ENCODE measurements at regions of chr14 and their contacts with region 1.

Region 1: GRCh38 chr14:70600382-70601157 is at the start of gene MED6:
- DNase-seq: peak; percentile 83 to 96 (median 94)
- ATAC-seq: peak; percentile 100
- H3K4me3 ChIP-seq: peak within 1 kb of the TSS; percentile 90 to 99
- H3K4me3 Mint-ChIP-seq: peak within 1 kb of the TSS; percentile 99
- H3K27ac ChIP-seq: peak within 1 kb of the TSS; percentile 92 to 96
- H3K27ac Mint-ChIP-seq: peak within 1 kb of the TSS; percentile 99
- H3K4me1 ChIP-seq: peaks cover 20% of the 10 kb centered on the region
- H3K4me1 Mint-ChIP-seq: peaks cover 30% of the 10 kb centered on the region
- H3K27me3 ChIP-seq: no peaks in the 10 kb centered on the region
- H3K27me3 Mint-ChIP-seq: no peaks in the 10 kb centered on the region
- CTCF ChIP-seq: no peak
- total RNA-seq, gene MED6: 116 to 119 TPM

Region 2: DNA sequence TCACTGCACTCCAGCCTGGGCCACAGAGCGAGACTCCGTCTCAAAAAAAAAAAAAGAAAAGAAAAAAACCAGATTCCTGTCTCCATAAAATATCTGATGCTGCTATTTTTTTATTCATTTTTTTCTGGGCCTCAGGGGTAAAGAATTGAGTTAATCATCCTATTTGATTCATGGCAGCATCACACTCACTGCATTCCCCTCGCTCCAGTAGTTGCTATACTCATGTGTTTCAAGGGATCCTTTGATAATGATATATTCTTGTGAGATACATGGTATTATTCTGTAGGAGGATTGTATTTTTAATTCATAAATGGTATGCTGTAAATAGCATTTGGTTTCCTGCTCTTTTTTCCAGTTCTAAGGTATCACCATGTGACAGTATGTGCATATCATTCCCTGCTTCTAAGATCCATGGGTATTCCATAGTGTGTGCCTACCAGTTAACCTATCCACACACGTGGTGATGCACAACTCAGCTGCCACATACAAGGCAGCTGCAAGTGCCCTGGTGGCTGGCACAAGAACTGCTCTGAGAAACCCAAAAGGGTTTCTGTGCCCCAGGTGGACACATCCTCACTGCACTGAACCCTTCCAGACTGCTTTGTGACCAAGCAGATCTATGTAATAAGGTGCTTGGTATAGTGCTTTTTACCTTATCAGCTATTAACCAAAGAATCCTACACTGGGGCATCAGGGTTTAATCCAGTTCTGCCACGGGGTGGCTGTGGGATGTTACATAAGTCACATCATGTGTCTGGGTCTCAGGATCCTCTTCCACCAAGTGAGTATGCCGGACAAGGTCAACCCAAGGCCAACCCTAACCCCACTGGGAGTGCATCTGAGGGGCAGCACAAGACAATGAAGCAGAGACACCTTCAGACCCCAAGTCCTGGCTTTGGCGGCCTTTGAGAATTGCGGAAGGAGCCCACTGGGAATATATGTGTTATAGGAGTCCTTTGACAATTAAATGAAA is 1882.3 kb before region 1 on chr14:
- CTCF ChIA-PET with region 1: no interaction called
- POLR2A ChIA-PET with region 1: no interaction called
- intact Hi-C with region 1: no loop called
- DNase-seq: peak in 1 of 9 experiments; percentile 18
- ATAC-seq: peak; percentile 36
- H3K4me3 ChIP-seq: no peak overlapping the region
- H3K4me3 Mint-ChIP-seq: no peak overlapping the region
- H3K27ac ChIP-seq: no peak overlapping the region
- H3K27ac Mint-ChIP-seq: no peak overlapping the region
- H3K4me1 ChIP-seq: peaks cover 8% of the 10 kb centered on the region
- H3K4me1 Mint-ChIP-seq: peaks cover 33% of the 10 kb centered on the region
- H3K27me3 ChIP-seq: no peaks in the 10 kb centered on the region
- H3K27me3 Mint-ChIP-seq: no peaks in the 10 kb centered on the region
- CTCF ChIP-seq: no peak

Region 3: DNA sequence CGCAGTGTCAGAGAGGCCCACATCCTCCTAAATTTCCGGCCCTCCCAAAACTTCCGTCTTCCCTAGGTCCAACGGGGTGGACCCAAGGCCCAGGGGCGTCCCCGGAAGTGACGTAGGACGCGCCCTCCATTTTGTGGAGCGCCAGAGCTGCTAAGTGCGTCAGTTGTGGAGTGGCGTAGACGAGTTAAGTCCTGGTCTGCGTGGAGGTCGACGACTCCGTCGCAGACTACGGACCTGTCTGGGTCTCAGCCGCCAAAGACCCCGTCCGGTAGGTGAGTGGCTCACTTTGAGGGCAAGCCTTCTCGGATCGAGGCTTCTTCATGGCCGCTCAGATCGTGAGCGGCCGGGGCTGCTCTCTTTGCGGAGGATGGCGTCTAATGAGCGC is 833.6 kb before region 1 on chr14 and contains the start of gene SRSF5:
- CTCF ChIA-PET with region 1: no interaction called
- POLR2A ChIA-PET with region 1: no interaction called
- intact Hi-C with region 1: loop called in 1 of 2 experiments (anchors 5 kb)
- DNase-seq: peak; percentile 86 to 97 (median 96)
- ATAC-seq: peak; percentile 80
- H3K4me3 ChIP-seq: peak within 1 kb of the TSS; percentile 78 to 88
- H3K4me3 Mint-ChIP-seq: peak within 1 kb of the TSS; percentile 99
- H3K27ac ChIP-seq: peak within 1 kb of the TSS; percentile 97 to 99
- H3K27ac Mint-ChIP-seq: peak within 1 kb of the TSS; percentile 100
- H3K4me1 ChIP-seq: peaks cover 50% of the 10 kb centered on the region
- H3K4me1 Mint-ChIP-seq: peaks cover 67% of the 10 kb centered on the region
- H3K27me3 ChIP-seq: no peaks in the 10 kb centered on the region
- H3K27me3 Mint-ChIP-seq: no peaks in the 10 kb centered on the region
- CTCF ChIP-seq: no peak
- total RNA-seq, gene SRSF5: 1,544 to 1,597 TPM

Region 4: GRCh38 chr14:70359181-70360090 is 241.1 kb before region 1 on chr14 and contains the start of gene COX16:
- CTCF ChIA-PET with region 1: no interaction called
- POLR2A ChIA-PET with region 1: no interaction called
- intact Hi-C with region 1: loop called (anchors 1 to 5 kb)
- DNase-seq: peak; percentile 65 to 94 (median 79)
- ATAC-seq: peak; percentile 95
- H3K4me3 ChIP-seq: peak within 1 kb of the TSS; percentile 84 to 87
- H3K4me3 Mint-ChIP-seq: peak within 1 kb of the TSS; percentile 99
- H3K27ac ChIP-seq: peak within 1 kb of the TSS; percentile 56 to 75
- H3K27ac Mint-ChIP-seq: peak within 1 kb of the TSS; percentile 94
- H3K4me1 ChIP-seq: peaks cover 17% of the 10 kb centered on the region
- H3K4me1 Mint-ChIP-seq: peaks cover 47% of the 10 kb centered on the region
- H3K27me3 ChIP-seq: no peaks in the 10 kb centered on the region
- H3K27me3 Mint-ChIP-seq: no peaks in the 10 kb centered on the region
- CTCF ChIP-seq: no peak
- total RNA-seq, gene COX16: 15.4 to 22.4 TPM

Region 5: DNA sequence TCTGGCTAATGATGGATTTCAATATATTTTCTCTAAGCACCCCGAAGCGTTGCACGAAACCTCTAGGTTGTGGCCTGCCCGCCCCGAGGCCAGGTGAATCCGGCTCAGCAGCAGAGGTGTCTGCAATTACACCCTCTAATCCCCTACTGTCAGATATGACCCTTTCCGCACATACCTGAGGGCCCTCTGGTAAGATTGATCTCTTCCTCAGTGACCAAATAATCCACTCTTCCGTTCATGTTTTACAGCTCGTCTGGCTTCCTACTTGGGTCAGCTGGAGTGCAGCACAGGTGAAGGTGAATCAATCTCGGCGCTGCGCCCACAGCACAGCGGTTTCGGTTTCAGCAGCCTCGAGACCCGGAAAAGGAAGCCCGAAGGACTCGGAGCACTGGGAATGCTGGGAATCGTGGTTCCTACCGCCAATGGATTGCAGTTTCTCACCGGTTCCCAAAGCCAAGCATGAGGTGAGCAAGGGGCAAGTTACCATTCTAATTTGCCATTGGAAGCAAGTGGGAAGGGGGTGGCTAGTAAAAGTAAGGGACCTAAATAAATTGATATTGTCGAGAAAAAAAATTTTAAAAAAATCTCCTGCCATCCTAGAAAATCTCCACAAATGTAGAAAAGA is 183.7 kb before region 1 on chr14 and contains the start of gene SYNJ2BP:
- CTCF ChIA-PET with region 1: no interaction called
- POLR2A ChIA-PET with region 1: interaction called, 3 read pairs
- intact Hi-C with region 1: loop called in 1 of 2 experiments (anchors 2 kb)
- DNase-seq: peak; percentile 11 to 79 (median 64)
- ATAC-seq: peak; percentile 81
- H3K4me3 ChIP-seq: peak within 1 kb of the TSS; percentile 51 to 95
- H3K4me3 Mint-ChIP-seq: peak within 1 kb of the TSS; percentile 95
- H3K27ac ChIP-seq: peak within 1 kb of the TSS; percentile 31 to 71
- H3K27ac Mint-ChIP-seq: peak within 1 kb of the TSS; percentile 93
- H3K4me1 ChIP-seq: peaks cover 18% of the 10 kb centered on the region
- H3K4me1 Mint-ChIP-seq: peaks cover 47% of the 10 kb centered on the region
- H3K27me3 ChIP-seq: no peaks in the 10 kb centered on the region
- H3K27me3 Mint-ChIP-seq: peaks cover 2% of the 10 kb centered on the region
- CTCF ChIP-seq: no peak
- total RNA-seq, gene SYNJ2BP: 5.5 to 6.5 TPM

Region 6: GRCh38 chr14:70655110-70655826 is 54.7 kb after region 1 on chr14:
- CTCF ChIA-PET with region 1: no interaction called
- POLR2A ChIA-PET with region 1: no interaction called
- intact Hi-C with region 1: loop called (anchors 2 to 5 kb)
- DNase-seq: peak; percentile 31 to 91 (median 79)
- ATAC-seq: peak; percentile 88
- H3K4me3 ChIP-seq: peak overlapping the region; percentile 32 to 46
- H3K4me3 Mint-ChIP-seq: peak overlapping the region; percentile 86
- H3K27ac ChIP-seq: peak overlapping the region; percentile 76 to 90
- H3K27ac Mint-ChIP-seq: peak overlapping the region; percentile 99
- H3K4me1 ChIP-seq: peaks cover 91% of the 10 kb centered on the region
- H3K4me1 Mint-ChIP-seq: peaks cover 93% of the 10 kb centered on the region
- H3K27me3 ChIP-seq: no peaks in the 10 kb centered on the region
- H3K27me3 Mint-ChIP-seq: no peaks in the 10 kb centered on the region
- CTCF ChIP-seq: no peak